CD4-positive, alpha-beta T cell (primary cell): ENCODE measurements at regions of chr16 and their contacts with region 1.

Region 1: DNA sequence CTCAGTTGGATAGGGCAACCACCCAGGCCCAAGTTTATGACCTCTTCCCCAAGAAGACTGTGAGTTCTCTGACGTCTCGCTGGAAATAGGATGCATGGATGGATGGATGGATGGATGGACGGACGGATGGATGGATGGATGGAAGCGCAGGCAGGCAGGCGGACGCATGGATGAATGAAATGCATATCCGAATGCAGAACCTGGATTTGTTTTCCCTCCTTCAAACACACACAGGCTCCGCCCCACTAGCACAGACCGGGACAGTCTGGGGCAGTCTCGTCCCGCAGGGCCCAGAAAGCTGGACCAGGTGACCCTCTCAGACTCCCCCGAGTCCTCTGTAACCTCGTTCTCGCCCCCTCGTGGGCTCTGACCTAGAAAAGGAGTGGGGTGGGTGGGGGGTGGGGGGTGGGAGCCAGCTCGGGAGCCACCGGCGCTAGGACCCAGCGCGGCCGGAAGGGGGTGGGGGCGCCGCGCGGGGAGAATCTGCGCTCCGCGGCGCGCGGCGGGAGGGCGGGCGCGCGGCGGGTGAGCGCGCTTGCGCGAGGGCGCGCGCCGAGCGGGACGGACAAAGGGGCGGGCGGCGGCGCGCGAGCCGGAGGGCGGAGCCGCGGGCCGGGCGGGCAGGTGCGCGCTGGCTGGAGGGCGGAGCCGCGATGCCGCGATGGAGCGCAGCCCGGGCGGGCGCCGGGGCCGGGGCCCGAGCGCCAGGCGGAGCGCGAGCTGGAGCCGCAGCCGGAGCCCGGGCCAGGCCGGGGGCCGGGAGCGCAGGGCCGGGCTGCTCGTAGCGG is at the start of gene SBK1:
- DNase-seq: peak; percentile 71 to 96 (median 84)
- ATAC-seq: peak; percentile 91
- H3K4me3 ChIP-seq: peak within 1 kb of the TSS; percentile 97
- H3K4me3 Mint-ChIP-seq: peak within 1 kb of the TSS; percentile 95
- H3K27ac ChIP-seq: peak within 1 kb of the TSS in 1 of 2 donors; percentile 67
- H3K27ac Mint-ChIP-seq: peak within 1 kb of the TSS; percentile 86
- H3K4me1 ChIP-seq: peaks cover 70% of the 10 kb centered on the region
- H3K4me1 Mint-ChIP-seq: peaks cover 70% of the 10 kb centered on the region
- H3K27me3 ChIP-seq: no peaks in the 10 kb centered on the region
- H3K27me3 Mint-ChIP-seq: no peaks in the 10 kb centered on the region
- CTCF ChIP-seq: no peak
- total RNA-seq, gene SBK1: 13.0 to 13.5 TPM

Region 2: DNA sequence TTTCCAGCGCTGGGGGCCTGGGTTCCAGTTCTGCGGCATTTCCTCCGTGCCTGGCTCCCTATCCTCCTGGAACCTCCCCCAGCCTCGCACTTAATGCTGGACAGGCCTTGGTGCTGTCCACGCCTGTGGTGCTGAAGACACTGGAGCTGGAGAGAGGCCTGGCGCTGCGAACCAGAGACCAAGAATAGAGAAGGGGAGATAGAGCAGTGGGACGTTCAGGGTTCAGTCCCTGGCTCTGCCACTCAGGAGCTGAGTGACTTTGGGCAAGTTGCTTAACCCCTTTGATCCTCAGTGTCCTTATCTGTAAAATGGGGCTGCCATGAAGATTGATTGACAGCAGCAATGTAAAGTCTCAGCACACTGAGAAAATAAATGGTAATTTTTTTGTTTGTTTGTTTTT is 12.1 kb after region 1 on chr16:
- CTCF ChIA-PET with region 1: no interaction called
- POLR2A ChIA-PET with region 1: interaction called, 50 read pairs
- intact Hi-C with region 1: loop called in 1 of 2 experiments (anchors 2 kb)
- DNase-seq: no peak
- ATAC-seq: peak; percentile 34
- H3K4me3 ChIP-seq: no peak overlapping the region
- H3K4me3 Mint-ChIP-seq: no peak overlapping the region
- H3K27ac ChIP-seq: no peak overlapping the region
- H3K27ac Mint-ChIP-seq: peak overlapping the region; percentile 65
- H3K4me1 ChIP-seq: peaks cover 39% of the 10 kb centered on the region
- H3K4me1 Mint-ChIP-seq: peaks cover 57% of the 10 kb centered on the region
- H3K27me3 ChIP-seq: no peaks in the 10 kb centered on the region
- H3K27me3 Mint-ChIP-seq: no peaks in the 10 kb centered on the region
- CTCF ChIP-seq: no peak

Region 3: GRCh38 chr16:28309811-28310311 is 17.8 kb after region 1 on chr16:
- CTCF ChIA-PET with region 1: no interaction called
- POLR2A ChIA-PET with region 1: interaction called, 50 read pairs
- intact Hi-C with region 1: loop called (anchors 2 kb)
- DNase-seq: peak; percentile 65 to 97 (median 85)
- ATAC-seq: peak; percentile 92
- H3K4me3 ChIP-seq: peak overlapping the region; percentile 32
- H3K4me3 Mint-ChIP-seq: peak overlapping the region; percentile 75
- H3K27ac ChIP-seq: peak overlapping the region; percentile 86 to 89
- H3K27ac Mint-ChIP-seq: peak overlapping the region; percentile 96
- H3K4me1 ChIP-seq: peaks cover 59% of the 10 kb centered on the region
- H3K4me1 Mint-ChIP-seq: peaks cover 69% of the 10 kb centered on the region
- H3K27me3 ChIP-seq: no peaks in the 10 kb centered on the region
- H3K27me3 Mint-ChIP-seq: no peaks in the 10 kb centered on the region
- CTCF ChIP-seq: no peak

Region 4: GRCh38 chr16:28317040-28317880 is 25.2 kb after region 1 on chr16:
- CTCF ChIA-PET with region 1: interaction called, 18 read pairs
- POLR2A ChIA-PET with region 1: interaction called, 47 read pairs
- intact Hi-C with region 1: no loop called
- DNase-seq: peak; percentile 61 to 86 (median 70)
- ATAC-seq: peak; percentile 75
- H3K4me3 ChIP-seq: no peak overlapping the region
- H3K4me3 Mint-ChIP-seq: peak overlapping the region; percentile 38
- H3K27ac ChIP-seq: no peak overlapping the region
- H3K27ac Mint-ChIP-seq: peak overlapping the region; percentile 78
- H3K4me1 ChIP-seq: peaks cover 50% of the 10 kb centered on the region
- H3K4me1 Mint-ChIP-seq: peaks cover 28% of the 10 kb centered on the region
- H3K27me3 ChIP-seq: no peaks in the 10 kb centered on the region
- H3K27me3 Mint-ChIP-seq: no peaks in the 10 kb centered on the region
- CTCF ChIP-seq: peak; percentile 95